A549 (cell line): ENCODE measurements at regions of chr19 and their contacts with region 1.

Region 1: DNA sequence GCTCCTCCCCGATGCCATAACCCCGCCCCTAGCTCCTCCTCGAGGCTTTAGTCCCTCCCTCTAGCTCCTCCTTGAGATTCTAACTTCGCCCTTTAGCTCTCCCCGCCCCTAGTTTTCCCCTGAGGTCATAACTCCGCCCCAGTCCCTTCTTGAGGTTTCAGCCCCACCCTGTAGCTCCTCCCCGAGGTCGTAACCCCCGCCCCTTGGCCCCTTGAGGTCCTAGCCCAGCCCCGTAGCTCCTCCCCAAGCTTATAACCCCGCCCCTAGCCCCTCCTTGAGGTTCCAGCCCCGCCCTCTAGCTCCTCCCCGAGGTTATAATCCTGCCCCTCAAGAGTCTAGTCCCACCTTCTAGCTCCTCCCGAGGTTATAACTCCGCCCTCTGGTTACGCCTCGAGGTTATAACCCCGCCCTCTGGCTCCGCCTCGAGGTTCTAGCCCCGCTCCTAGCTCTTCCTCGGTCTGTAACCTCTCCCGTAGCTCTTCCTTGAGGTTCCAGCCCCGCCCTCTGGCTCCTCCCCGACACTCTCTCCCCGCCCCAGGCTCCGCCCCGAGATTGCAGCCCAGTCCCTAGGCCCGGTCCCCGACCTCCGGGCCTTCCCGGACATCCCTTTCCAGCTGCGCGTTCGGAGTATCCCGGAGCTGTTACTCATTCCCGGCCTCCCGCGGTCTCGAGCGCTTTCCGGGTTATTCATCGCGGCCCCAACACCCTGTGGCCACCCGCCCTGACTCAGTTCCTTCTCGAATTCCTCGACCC is 1.4 kb downstream of the PLAUR start:
- DNase-seq: peak; percentile 99 to 100
- ATAC-seq: peak; percentile 87 to 95
- H3K4me3 ChIP-seq: peak overlapping the region; percentile 58
- H3K27ac ChIP-seq: peak overlapping the region; percentile 81 to 87
- H3K4me1 ChIP-seq: peaks cover 22% of the 10 kb centered on the region
- CTCF ChIP-seq: no peak
- EP300 ChIP-seq: no peak
- POLR2A ChIP-seq: peak; percentile 76
- RAD21 ChIP-seq: no peak

Region 2: GRCh38 chr19:43569657-43570056 is 98.9 kb before region 1 on chr19:
- CTCF ChIA-PET with region 1: no interaction called
- POLR2A ChIA-PET with region 1: no interaction called
- DNase-seq: no peak
- ATAC-seq: no peak
- H3K4me3 ChIP-seq: no peak overlapping the region
- H3K27ac ChIP-seq: no peak overlapping the region
- H3K4me1 ChIP-seq: peaks cover 5% of the 10 kb centered on the region; the same call in 1 of the 3 replicates
- CTCF ChIP-seq: no peak
- EP300 ChIP-seq: no peak
- POLR2A ChIP-seq: no peak
- RAD21 ChIP-seq: no peak

Region 3: DNA sequence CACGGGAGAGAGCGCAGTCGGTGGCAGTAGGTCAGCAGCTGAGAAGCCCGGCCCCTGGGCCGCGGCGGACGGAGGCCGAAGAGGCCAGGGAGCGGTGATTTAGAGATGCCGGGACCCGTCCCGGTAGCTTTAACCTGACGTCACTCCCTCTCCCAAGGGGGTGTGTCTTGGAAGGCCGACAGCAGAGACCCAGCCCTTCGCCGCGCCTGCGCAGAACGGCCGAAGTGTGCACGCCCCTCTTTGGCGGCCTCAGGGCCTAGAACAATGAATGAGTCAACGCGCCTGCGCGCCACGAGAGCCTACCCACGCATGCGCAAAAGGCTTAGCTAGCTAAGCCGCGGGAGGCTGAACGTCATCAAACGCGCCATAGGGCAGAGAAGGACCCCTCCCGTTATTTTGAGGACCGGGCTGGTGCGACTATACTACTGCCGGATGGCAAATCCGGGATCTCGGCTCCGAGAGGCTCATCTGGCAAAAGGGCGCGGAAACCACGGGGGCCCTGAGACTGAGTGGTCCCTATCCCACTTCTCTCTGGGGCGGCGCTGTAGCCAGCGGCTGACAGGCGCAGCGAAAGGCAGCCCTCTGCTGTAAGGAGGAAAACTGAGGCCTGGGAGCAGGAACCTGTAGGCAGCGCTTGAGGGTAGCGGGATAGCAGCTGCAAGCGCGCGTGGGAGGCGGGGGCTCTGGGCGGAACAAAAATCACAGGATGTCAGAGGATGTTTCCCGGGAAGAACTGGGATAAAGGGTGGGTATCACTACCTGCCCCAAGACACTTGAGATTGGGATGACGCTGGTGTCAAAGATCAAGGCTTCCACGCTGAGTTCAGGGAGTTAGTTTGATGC is 72.4 kb before region 1 on chr19 and contains the starts of genes IRGQ and ZNF576:
- CTCF ChIA-PET with region 1: no interaction called
- POLR2A ChIA-PET with region 1: interaction called, 11 read pairs
- DNase-seq: peak; percentile 99 to 100
- ATAC-seq: peak; percentile 88 to 89
- H3K4me3 ChIP-seq: peak within 1 kb of the TSS; percentile 66
- H3K27ac ChIP-seq: peak within 1 kb of the TSS; percentile 86 to 88
- H3K4me1 ChIP-seq: peaks cover 19% of the 10 kb centered on the region
- CTCF ChIP-seq: no peak
- EP300 ChIP-seq: no peak
- POLR2A ChIP-seq: peak; percentile 78
- RAD21 ChIP-seq: peak; percentile 13 to 36; a peak in 4 of 5 replicates
- polyA plus RNA-seq, gene IRGQ: 10.0 and 14.2 TPM in 2 replicates
- polyA plus RNA-seq, gene ZNF576: 10.6 and 11.2 TPM in 2 replicates

Region 4: GRCh38 chr19:43704002-43704705 is 35.6 kb after region 1 on chr19:
- CTCF ChIA-PET with region 1: interaction called, 9 read pairs
- POLR2A ChIA-PET with region 1: interaction called, 16 read pairs
- DNase-seq: peak in 1 of 2 experiments; percentile 66
- ATAC-seq: no peak
- H3K4me3 ChIP-seq: no peak overlapping the region
- H3K27ac ChIP-seq: peak overlapping the region; percentile 76 to 91
- H3K4me1 ChIP-seq: peaks cover 49% of the 10 kb centered on the region
- CTCF ChIP-seq: no peak
- EP300 ChIP-seq: no peak
- POLR2A ChIP-seq: no peak
- RAD21 ChIP-seq: no peak

Region 5: GRCh38 chr19:43747557-43748204 is 79.1 kb after region 1 on chr19:
- CTCF ChIA-PET with region 1: interaction called, 12 read pairs
- POLR2A ChIA-PET with region 1: interaction called, 75 read pairs
- DNase-seq: no peak
- ATAC-seq: 0 out of 6 replicates have a peak, but pooled peaks of 1 of the 2 experiments have one; percentile 26
- H3K4me3 ChIP-seq: no peak overlapping the region
- H3K27ac ChIP-seq: no peak overlapping the region
- H3K4me1 ChIP-seq: peaks cover 13% of the 10 kb centered on the region
- CTCF ChIP-seq: no peak
- EP300 ChIP-seq: no peak
- POLR2A ChIP-seq: no peak
- RAD21 ChIP-seq: no peak

Region 6: DNA sequence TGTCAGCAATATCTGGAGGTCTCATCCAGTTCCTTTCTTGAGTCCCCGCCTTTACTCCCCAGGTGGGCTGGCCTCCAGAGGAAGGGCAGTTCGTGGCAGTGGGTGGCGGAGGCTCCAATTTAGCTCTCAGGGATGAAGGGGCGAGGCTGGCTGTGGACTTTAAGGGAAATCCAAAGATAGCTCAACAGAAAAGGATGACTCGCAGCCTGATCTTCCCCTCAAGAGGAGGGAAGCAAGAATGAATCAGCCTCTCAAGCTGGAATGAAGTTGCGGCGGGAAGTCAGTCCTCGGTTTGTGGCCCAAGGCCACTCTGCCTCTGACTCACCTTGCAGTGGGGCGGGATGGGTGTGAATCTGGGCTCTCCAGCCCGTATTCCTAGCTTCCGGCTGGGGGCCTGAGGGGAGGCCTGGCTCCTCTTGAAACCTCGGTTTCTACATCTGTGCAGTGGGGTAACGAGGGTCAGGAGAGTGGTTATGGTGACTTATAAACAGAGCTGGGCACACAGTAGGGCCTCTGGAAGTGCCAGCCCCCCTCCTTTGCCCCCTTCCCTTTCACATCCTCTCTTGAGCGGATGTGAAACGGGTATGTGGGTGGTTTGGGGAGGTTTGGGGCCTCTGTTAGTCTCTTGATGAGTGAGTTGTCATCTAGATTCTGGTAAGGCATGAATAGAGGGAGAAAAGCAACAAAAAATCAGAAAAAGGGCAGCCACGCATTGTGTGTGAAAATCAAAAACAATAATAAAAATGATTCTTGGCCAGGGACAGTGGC is 96.7 kb after region 1 on chr19:
- CTCF ChIA-PET with region 1: interaction called, 34 read pairs
- POLR2A ChIA-PET with region 1: interaction called, 11 read pairs
- DNase-seq: peak; percentile 93 to 95
- ATAC-seq: peak; percentile 92 to 94
- H3K4me3 ChIP-seq: 0 out of 3 replicates have a peak overlapping the region, but pooled peaks have one; percentile 2
- H3K27ac ChIP-seq: peak overlapping the region; percentile 90 to 92
- H3K4me1 ChIP-seq: peaks cover 38% of the 10 kb centered on the region
- CTCF ChIP-seq: no peak
- EP300 ChIP-seq: peak in 1 of 2 experiments; percentile 44; a peak in 1 of 5 replicates
- POLR2A ChIP-seq: no peak
- RAD21 ChIP-seq: peak; percentile 7 to 24; a peak in 2 of 5 replicates